ENCODE measurements at regions of chr11 and their contacts with region 1.

Region 1: GRCh38 chr11:65425971-65426838 is 3.6 kb downstream of the NEAT1 start:
- DNase-seq: no peak
- H3K4me3 Mint-ChIP-seq: peak overlapping the region; percentile 99
- H3K27ac Mint-ChIP-seq: peak overlapping the region; percentile 99
- H3K4me1 Mint-ChIP-seq: peaks cover 71% of the 10 kb centered on the region
- H3K27me3 Mint-ChIP-seq: peaks cover 10% of the 10 kb centered on the region

Region 2: DNA sequence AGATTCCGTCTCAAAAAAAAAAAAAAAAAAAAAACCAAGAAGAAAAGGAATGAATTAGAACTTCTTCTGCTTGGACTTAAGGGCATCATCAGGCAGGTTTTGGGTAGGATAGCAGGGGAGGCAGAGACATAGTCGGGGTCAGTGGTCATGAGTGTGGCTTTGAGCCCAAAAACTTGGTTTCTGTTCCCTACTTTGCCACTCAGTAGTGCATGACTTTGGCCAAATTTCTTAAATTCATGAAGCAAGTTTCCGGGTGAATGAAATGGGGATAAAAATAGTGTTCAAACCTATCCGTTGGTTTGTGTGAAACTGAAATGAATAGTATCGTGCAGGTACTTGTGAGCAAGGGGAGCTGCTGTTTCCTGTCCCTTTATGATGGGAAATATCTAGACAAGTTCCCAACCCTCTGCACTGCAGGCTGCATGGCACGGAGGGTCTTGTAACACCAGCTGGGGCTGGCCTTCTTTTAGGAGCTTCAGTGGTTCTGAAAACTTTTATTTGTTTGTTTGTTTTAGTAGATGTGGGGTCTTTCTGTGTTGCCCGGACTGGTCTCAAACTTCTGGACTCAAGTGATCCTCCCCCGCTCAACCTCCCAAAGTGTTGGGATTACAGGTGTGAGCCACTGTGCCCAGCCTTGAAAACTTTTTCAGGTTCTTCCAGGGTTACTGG is 14.8 kb after region 1 on chr11:
- intact Hi-C with region 1: loop called (anchors 1 kb)
- DNase-seq: no peak
- H3K4me3 Mint-ChIP-seq: peak overlapping the region; percentile 22
- H3K27ac Mint-ChIP-seq: peak overlapping the region; percentile 91
- H3K4me1 Mint-ChIP-seq: peaks cover 62% of the 10 kb centered on the region
- H3K27me3 Mint-ChIP-seq: peaks cover 2% of the 10 kb centered on the region

Region 3: GRCh38 chr11:65497141-65498041 is 71.2 kb after region 1 on chr11:
- intact Hi-C with region 1: loop called (anchors 1 kb)
- DNase-seq: peak; percentile 98
- H3K4me3 Mint-ChIP-seq: no peak overlapping the region
- H3K27ac Mint-ChIP-seq: no peak overlapping the region
- H3K4me1 Mint-ChIP-seq: peaks cover 37% of the 10 kb centered on the region
- H3K27me3 Mint-ChIP-seq: no peaks in the 10 kb centered on the region

Measured in activated T-helper 1 cell treated with anti-CD3 and anti-CD28 coated beads, Interleukin-12 subunit alpha, Interleukin-12 subunit beta, Interleukin-2, Interleukin-4 antibody, amounts not matched to agents 30 ng/mL and 10 ng/mL and 1 ng/mL, durations not matched to agents 14 hours and 24 hours and 36 hours (primary cell).